CD4-positive, alpha-beta T cell (primary cell): ENCODE measurements at regions of chr5 and their contacts with region 1.

Region 1: DNA sequence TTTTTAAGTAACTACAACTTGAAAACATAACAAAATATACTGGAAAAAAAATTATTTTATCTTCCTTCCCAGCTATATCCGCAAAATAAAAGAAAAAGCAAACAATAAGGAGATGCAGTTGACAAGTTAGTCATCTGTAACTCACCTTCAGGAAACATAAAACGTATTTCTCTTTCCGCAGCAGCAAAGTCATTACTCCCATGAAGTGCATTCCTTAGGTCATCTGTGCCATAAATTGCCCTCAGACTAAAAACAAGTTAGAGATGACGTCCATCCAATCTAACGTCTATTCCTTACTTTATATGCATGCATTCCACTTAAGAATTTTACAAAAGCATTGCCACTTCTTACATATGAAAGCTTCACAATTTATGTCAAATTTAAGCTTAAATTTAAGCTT is 10.9 kb downstream of the NME5 start:
- DNase-seq: no peak
- ATAC-seq: no peak
- H3K4me3 ChIP-seq: no peak overlapping the region
- H3K4me3 Mint-ChIP-seq: no peak overlapping the region
- H3K27ac ChIP-seq: no peak overlapping the region
- H3K27ac Mint-ChIP-seq: no peak overlapping the region
- H3K4me1 ChIP-seq: no peaks in the 10 kb centered on the region
- H3K4me1 Mint-ChIP-seq: no peaks in the 10 kb centered on the region
- H3K27me3 ChIP-seq: peaks cover 0 to 4% of the 10 kb centered on the region in 2 experiments
- H3K27me3 Mint-ChIP-seq: peaks cover 10% of the 10 kb centered on the region
- CTCF ChIP-seq: no peak

Region 2: GRCh38 chr5:137320056-137321045 is 808.0 kb before region 1 on chr5:
- CTCF ChIA-PET with region 1: no interaction called
- POLR2A ChIA-PET with region 1: no interaction called
- intact Hi-C with region 1: loop called in 1 of 2 experiments (anchors 5 kb)
- DNase-seq: peak in 4 of 14 experiments; percentile 3 to 35 (median 29)
- ATAC-seq: no peak
- H3K4me3 ChIP-seq: no peak overlapping the region
- H3K4me3 Mint-ChIP-seq: no peak overlapping the region
- H3K27ac ChIP-seq: no peak overlapping the region
- H3K27ac Mint-ChIP-seq: no peak overlapping the region
- H3K4me1 ChIP-seq: no peaks in the 10 kb centered on the region
- H3K4me1 Mint-ChIP-seq: no peaks in the 10 kb centered on the region
- H3K27me3 ChIP-seq: peaks cover 0 to 12% of the 10 kb centered on the region in 2 experiments
- H3K27me3 Mint-ChIP-seq: peaks cover 40% of the 10 kb centered on the region
- CTCF ChIP-seq: peak; percentile 46

Region 3: DNA sequence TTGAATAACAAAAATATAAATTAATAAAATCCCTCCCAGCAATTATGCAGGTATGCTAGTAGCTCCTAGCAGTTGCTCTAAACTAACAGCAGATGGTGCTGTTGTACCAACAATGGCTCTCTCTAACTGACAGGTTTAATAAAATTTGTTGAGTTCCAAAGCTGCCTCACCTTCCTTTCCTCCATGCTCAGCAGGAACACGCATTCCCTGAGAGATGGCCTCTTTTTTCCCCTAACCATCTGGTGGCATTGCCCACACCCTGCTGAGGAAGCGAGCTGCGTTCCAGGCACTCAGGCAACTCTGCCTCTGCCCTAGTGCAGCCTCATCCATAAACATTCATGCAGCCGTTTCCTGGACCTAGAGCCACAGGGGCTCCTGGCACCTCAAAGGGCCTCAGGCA is 498.7 kb before region 1 on chr5:
- CTCF ChIA-PET with region 1: interaction called, 6 read pairs
- POLR2A ChIA-PET with region 1: no interaction called
- intact Hi-C with region 1: loop called (anchors 1 to 2 kb)
- DNase-seq: peak in 5 of 14 experiments; percentile 7 to 75 (median 58)
- ATAC-seq: peak; percentile 61
- H3K4me3 ChIP-seq: no peak overlapping the region
- H3K4me3 Mint-ChIP-seq: no peak overlapping the region
- H3K27ac ChIP-seq: no peak overlapping the region
- H3K27ac Mint-ChIP-seq: no peak overlapping the region
- H3K4me1 ChIP-seq: no peaks in the 10 kb centered on the region
- H3K4me1 Mint-ChIP-seq: no peaks in the 10 kb centered on the region
- H3K27me3 ChIP-seq: no peaks in the 10 kb centered on the region
- H3K27me3 Mint-ChIP-seq: no peaks in the 10 kb centered on the region
- CTCF ChIP-seq: peak; percentile 88

Region 4: DNA sequence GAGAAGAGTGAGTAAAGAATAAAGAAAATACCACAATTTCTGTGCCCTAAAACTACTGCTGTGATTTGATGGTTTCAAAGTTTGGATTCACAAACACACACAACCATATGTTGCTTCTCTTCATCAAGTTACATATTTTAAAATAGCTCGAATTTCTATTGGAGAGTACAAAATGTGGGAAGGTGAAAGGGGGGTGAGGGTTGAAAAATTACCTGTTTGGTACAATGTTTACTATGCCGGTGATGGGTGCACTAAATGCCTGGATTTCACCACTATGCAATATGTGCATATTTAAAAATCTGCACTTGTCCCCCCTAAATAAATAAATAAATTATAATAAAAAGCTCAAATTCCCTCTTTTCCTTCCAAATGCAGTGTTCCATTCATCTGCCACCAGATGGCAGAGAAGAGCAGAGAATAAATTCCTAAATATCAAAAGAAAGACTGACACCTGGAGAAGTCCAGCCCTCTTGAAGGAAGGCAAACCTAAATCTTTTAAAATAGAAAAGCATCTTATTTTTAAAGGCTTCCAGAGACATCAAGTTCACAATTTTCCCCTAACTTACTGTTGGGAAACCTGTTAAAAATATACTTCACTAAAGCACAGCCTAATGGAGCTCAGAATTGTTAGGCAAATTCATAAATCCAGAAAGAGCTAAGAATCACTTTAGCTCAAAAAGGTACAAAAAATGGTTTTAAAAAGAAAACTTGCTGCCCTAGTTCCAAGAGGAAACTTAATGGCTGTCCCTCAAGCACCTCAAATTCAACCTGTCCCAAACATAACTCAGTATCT is 349.4 kb before region 1 on chr5:
- CTCF ChIA-PET with region 1: interaction called, 7 read pairs
- POLR2A ChIA-PET with region 1: no interaction called
- intact Hi-C with region 1: loop called (anchors 1 to 2 kb)
- DNase-seq: peak in 4 of 14 experiments; percentile 4 to 55 (median 32)
- ATAC-seq: no peak
- H3K4me3 ChIP-seq: no peak overlapping the region
- H3K4me3 Mint-ChIP-seq: no peak overlapping the region
- H3K27ac ChIP-seq: no peak overlapping the region
- H3K27ac Mint-ChIP-seq: no peak overlapping the region
- H3K4me1 ChIP-seq: no peaks in the 10 kb centered on the region
- H3K4me1 Mint-ChIP-seq: no peaks in the 10 kb centered on the region
- H3K27me3 ChIP-seq: no peaks in the 10 kb centered on the region
- H3K27me3 Mint-ChIP-seq: no peaks in the 10 kb centered on the region
- CTCF ChIP-seq: peak; percentile 91

Region 5: GRCh38 chr5:137938751-137939143 is 189.6 kb before region 1 on chr5:
- CTCF ChIA-PET with region 1: no interaction called
- POLR2A ChIA-PET with region 1: no interaction called
- intact Hi-C with region 1: no loop called
- DNase-seq: no peak
- ATAC-seq: no peak
- H3K4me3 ChIP-seq: no peak overlapping the region
- H3K4me3 Mint-ChIP-seq: no peak overlapping the region
- H3K27ac ChIP-seq: no peak overlapping the region
- H3K27ac Mint-ChIP-seq: no peak overlapping the region
- H3K4me1 ChIP-seq: no peaks in the 10 kb centered on the region
- H3K4me1 Mint-ChIP-seq: no peaks in the 10 kb centered on the region
- H3K27me3 ChIP-seq: no peaks in the 10 kb centered on the region
- H3K27me3 Mint-ChIP-seq: no peaks in the 10 kb centered on the region
- CTCF ChIP-seq: no peak

Region 6: DNA sequence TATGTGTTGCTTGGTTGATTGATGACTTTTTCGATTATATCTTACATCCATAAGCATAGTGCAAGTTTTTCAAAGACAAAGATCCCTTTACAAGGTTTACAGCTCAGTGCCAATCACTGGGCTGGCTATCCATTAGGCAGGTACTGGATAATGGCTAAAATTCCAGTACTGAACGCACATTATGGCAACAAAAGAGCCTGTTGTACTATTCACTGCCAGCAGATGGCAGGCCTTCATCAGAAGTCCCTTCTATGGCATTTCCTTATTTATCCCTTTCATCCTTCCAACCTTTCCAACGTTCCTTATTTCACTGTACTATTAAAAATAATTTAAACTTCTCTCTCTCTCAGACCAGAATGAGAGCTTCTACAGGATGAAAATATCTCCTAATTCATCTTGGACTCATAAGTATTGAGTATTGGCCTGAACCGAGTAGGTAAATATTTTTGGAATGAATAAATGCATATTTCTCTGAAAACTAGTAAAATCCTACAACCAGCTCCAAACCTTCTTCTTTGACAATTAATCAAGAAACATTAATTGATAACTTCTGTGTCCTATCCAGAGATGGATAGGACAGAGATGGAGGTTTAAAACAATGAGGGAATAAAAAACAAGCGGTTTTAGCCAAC is 51.2 kb before region 1 on chr5:
- CTCF ChIA-PET with region 1: interaction called, 30 read pairs
- POLR2A ChIA-PET with region 1: interaction called, 5 read pairs
- intact Hi-C with region 1: loop called (anchors 1 kb)
- DNase-seq: peak; percentile 14 to 75 (median 38)
- ATAC-seq: peak; percentile 51
- H3K4me3 ChIP-seq: no peak overlapping the region
- H3K4me3 Mint-ChIP-seq: no peak overlapping the region
- H3K27ac ChIP-seq: no peak overlapping the region
- H3K27ac Mint-ChIP-seq: no peak overlapping the region
- H3K4me1 ChIP-seq: peaks cover 12% of the 10 kb centered on the region
- H3K4me1 Mint-ChIP-seq: peaks cover 9% of the 10 kb centered on the region
- H3K27me3 ChIP-seq: no peaks in the 10 kb centered on the region
- H3K27me3 Mint-ChIP-seq: no peaks in the 10 kb centered on the region
- CTCF ChIP-seq: peak; percentile 98